OCI-LY7 (cell line): ENCODE measurements at regions of chr13 and their contacts with region 1.

Region 1: DNA sequence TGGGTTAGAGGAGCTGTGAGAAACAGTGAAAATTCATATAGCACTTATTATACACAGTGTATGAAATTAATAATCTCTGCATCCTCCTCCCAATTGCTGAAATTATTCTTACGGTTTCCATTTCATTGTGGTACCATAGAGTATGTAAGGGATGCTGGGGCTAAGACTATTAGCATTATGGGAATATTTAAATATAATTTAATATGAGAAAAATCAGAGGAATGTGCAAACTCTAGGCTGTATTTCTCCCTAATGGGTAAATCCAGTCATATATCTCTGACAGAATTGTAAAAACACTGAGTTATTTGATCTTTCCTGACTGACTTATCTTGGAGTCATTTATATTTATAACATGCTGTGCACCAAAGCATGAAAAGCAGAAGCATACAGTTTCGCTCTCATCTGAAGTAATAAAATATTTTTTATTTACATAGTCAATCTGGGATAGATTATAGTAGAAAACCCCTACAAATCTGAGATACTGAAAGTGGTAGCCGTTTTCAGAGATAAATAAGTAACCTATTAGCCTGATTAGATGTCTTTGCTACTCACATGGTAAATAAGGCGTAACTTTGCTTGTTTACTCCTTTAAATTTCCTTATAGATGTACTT is 34.9 kb downstream of the LRCH1 start:
- DNase-seq: peak; percentile 52
- H3K4me3 ChIP-seq: peak overlapping the region; percentile 61
- H3K27ac ChIP-seq: peak overlapping the region; percentile 78
- H3K4me1 ChIP-seq: peaks cover 99% of the 10 kb centered on the region
- CTCF ChIP-seq: no peak

Region 2: GRCh38 chr13:46481166-46481565 is 106.7 kb before region 1 on chr13:
- CTCF ChIA-PET with region 1: no interaction called
- POLR2A ChIA-PET with region 1: no interaction called
- intact Hi-C with region 1: no loop called
- DNase-seq: no peak
- H3K4me3 ChIP-seq: no peak overlapping the region
- H3K27ac ChIP-seq: no peak overlapping the region
- H3K4me1 ChIP-seq: no peaks in the 10 kb centered on the region
- CTCF ChIP-seq: no peak

Region 3: DNA sequence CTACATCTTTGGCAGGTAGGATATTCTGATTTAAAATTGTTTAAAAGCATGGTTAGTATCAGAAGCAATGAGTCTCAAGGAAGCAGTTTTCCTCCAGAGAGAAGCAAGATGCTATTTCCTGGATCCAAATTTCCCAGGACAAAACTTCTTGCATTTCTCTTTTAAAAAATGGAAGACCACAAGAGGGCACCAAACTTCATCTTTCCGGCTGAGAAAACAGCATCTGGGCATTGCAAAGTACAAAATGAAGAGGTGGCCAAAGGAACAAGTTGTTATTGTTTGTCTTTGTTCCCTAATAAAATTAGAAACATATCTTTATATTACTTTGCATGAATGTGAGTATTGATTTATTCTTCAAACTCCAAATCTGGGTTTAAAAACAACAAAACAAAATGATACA is 95.0 kb before region 1 on chr13:
- CTCF ChIA-PET with region 1: no interaction called
- POLR2A ChIA-PET with region 1: no interaction called
- intact Hi-C with region 1: no loop called
- DNase-seq: peak; percentile 63
- H3K4me3 ChIP-seq: no peak overlapping the region
- H3K27ac ChIP-seq: no peak overlapping the region
- H3K4me1 ChIP-seq: no peaks in the 10 kb centered on the region
- CTCF ChIP-seq: peak; percentile 97

Region 4: DNA sequence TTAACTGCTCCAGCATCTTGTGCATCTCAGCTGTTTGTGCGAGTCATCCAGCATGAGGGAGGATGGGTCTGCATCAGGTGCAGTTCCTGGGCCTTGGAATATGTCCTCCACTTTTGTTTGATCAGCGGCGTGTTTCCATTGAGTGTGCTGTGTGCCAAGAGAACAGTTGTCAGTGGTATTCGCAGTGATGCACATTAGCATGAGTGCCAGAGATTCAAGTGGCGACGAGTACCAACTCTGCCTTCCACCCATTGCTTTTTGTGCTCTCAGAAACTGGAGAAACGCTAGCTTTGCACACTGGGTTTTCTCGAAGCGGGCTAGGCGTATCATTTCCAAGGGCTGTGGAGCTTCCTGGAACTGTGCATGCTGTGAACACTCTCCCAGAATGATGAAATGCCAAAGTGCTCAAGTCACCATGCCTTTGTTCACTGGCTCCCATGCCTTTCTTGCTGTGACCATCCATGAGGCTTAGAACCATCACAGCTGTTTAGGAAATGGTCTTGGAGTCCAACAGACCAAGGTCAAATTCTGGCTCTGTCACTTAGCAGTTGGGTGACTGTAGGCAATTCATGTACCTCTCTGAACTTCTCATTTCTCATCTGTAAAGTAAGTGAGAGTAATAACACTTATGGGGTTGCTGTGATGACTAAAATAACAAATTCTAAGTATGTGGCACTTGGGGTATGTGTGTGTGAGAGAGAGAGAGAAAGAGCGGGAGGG is 16.6 kb before region 1 on chr13:
- CTCF ChIA-PET with region 1: interaction called, 7 read pairs
- POLR2A ChIA-PET with region 1: interaction called, 27 read pairs
- intact Hi-C with region 1: no loop called
- DNase-seq: no peak
- H3K4me3 ChIP-seq: no peak overlapping the region
- H3K27ac ChIP-seq: no peak overlapping the region
- H3K4me1 ChIP-seq: peaks cover 49% of the 10 kb centered on the region
- CTCF ChIP-seq: no peak

Region 5: DNA sequence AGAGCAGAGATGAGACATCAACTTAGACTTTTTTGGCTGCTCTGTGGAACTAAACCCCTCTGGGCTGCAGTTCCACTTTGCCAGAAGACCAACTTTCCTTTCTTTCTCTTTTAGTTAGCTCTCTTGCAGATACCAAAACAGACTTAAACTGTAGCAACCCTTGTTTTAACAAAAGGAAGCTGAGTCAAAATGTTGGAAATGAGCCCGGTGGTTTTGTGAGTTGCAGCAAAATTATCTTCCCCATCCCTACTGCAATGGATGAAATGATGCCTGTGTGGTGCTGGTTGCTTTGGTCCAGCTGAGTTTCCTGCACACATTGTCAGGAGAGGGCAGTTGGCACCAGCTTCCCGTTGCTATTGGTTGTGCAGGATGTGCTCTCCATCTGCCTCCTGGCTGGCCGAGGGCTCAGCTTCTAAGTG is 80.4 kb after region 1 on chr13:
- CTCF ChIA-PET with region 1: no interaction called
- POLR2A ChIA-PET with region 1: interaction called, 12 read pairs
- intact Hi-C with region 1: no loop called
- DNase-seq: peak; percentile 18
- H3K4me3 ChIP-seq: peak overlapping the region; percentile 58
- H3K27ac ChIP-seq: peak overlapping the region; percentile 67
- H3K4me1 ChIP-seq: peaks cover 58% of the 10 kb centered on the region
- CTCF ChIP-seq: no peak